Activated CD8-positive, alpha-beta T cell treated with anti-CD3 and anti-CD28 coated beads, Interleukin-2, amount 10 ng/mL, durations not matched to agents 7 days and 5 days (primary cell): ENCODE measurements at regions of chr1 and their contacts with region 1.

Region 1: GRCh38 chr1:45011837-45012638 is at the start of gene UROD:
- DNase-seq: peak; percentile 96
- ATAC-seq: peak; percentile 80
- H3K4me3 Mint-ChIP-seq: peak within 1 kb of the TSS; percentile 75
- H3K27ac Mint-ChIP-seq: peak within 1 kb of the TSS; percentile 81
- H3K4me1 Mint-ChIP-seq: peaks cover 42% of the 10 kb centered on the region
- H3K27me3 Mint-ChIP-seq: no peaks in the 10 kb centered on the region
- total RNA-seq, gene UROD: 74.7 to 76.4 TPM

Region 2: DNA sequence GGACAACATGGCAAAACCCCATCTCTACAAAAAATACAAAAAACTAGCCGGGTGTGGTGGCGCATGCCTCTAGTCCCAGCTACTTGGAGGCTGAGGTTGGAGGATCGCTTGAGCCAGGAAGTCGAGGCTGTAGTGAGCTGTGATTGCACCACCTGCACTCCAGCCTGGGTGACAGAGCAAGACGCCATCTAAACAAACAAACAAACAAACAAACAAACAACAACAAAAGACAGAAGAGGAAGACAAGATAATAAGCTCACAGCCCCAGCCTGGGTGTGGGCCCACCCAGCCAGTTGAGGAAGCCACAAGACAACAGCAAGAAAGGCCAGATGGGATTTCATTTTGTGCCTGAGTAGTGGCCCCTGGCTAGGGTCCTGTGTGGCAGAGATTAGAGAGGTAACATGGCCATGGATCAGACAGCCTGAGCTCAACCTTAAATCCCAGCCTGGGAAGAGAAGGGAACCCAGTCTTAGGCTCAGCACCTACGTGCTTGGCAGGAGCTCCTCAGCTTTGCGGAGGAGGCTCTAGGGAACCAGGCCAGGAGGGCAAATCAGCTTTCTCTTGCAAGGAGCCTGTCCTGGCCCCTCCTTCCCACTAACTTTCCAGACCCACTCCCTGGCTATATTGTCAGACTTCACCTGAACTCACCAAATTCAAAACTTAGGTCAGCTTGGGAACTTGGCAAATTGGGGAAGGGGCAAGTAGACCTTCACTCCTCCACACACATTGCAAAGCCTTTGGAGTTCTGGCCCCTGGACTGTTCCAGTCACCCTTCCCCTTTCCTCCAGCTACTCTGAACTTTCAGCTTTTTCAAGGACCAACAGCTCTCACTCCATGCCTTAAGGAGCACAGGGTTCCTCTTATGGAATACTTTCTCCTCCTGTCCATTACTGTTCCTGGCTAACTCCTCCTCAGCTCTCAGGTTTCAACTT is 219.0 kb before region 1 on chr1:
- CTCF ChIA-PET with region 1: interaction called, 23 read pairs
- POLR2A ChIA-PET with region 1: interaction called, 3 read pairs
- DNase-seq: no peak
- ATAC-seq: no peak
- H3K4me3 Mint-ChIP-seq: no peak overlapping the region
- H3K27ac Mint-ChIP-seq: no peak overlapping the region
- H3K4me1 Mint-ChIP-seq: peaks cover 3% of the 10 kb centered on the region
- H3K27me3 Mint-ChIP-seq: no peaks in the 10 kb centered on the region

Region 3: DNA sequence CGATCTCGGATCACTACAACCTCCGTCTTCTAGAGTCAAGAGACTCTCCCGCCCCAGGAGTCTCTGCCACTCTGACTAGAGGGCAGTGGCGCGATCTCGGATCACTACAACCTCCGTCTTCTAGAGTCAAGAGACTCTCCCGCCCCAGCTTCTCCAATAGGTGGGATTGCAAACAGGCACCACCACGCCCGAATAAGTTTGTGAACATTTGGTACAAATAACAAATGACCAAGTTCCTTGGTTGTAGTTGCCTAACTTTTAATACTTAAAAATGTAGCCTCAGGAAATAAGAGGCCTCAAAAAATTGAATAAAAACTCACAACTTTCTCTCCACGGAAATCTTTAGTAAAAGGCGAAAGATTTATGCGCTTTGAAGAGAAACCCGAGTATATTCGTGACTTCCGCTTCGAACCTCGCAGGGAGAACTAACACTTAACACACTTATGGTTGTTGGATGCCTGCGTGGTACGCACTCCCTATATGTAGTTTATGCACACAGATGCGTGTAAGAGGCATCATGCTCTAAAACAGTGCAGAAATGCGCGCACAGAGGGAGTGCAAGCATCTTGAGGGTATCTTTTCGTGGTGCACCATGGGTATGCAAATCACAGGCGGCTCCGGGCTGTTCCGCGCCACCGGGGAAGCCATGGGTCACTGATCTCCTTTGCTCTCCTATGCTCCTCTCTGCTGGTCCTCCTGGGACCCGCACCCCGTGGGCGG is 192.3 kb before region 1 on chr1:
- CTCF ChIA-PET with region 1: interaction called, 8 read pairs
- POLR2A ChIA-PET with region 1: interaction called, 40 read pairs
- DNase-seq: peak; percentile 92
- ATAC-seq: peak; percentile 92
- H3K4me3 Mint-ChIP-seq: peak overlapping the region; percentile 92
- H3K27ac Mint-ChIP-seq: peak overlapping the region; percentile 100
- H3K4me1 Mint-ChIP-seq: peaks cover 51% of the 10 kb centered on the region
- H3K27me3 Mint-ChIP-seq: no peaks in the 10 kb centered on the region

Region 4: DNA sequence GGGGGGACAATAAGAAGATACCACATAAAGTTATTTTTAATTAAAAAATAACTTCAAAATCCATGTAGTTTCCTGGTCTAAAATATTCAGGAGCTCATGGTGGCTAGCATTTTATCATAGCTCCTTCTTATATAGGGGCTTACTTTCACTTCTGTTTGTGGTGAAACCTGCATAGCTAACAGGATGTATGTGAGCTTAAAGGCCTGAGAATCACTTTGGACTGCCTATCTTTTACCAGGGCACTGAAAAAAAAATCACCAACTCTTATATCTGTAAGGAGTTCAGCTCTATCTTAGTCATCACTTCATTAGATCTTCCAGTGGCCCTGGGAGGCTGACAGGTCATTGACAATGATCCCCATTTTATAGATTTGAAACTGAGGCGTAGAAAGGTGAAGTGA is 21.3 kb after region 1 on chr1:
- CTCF ChIA-PET with region 1: interaction called, 19 read pairs
- POLR2A ChIA-PET with region 1: no interaction called
- DNase-seq: no peak
- ATAC-seq: peak; percentile 91
- H3K4me3 Mint-ChIP-seq: no peak overlapping the region
- H3K27ac Mint-ChIP-seq: peak overlapping the region; percentile 83
- H3K4me1 Mint-ChIP-seq: peaks cover 13% of the 10 kb centered on the region
- H3K27me3 Mint-ChIP-seq: no peaks in the 10 kb centered on the region

Region 5: DNA sequence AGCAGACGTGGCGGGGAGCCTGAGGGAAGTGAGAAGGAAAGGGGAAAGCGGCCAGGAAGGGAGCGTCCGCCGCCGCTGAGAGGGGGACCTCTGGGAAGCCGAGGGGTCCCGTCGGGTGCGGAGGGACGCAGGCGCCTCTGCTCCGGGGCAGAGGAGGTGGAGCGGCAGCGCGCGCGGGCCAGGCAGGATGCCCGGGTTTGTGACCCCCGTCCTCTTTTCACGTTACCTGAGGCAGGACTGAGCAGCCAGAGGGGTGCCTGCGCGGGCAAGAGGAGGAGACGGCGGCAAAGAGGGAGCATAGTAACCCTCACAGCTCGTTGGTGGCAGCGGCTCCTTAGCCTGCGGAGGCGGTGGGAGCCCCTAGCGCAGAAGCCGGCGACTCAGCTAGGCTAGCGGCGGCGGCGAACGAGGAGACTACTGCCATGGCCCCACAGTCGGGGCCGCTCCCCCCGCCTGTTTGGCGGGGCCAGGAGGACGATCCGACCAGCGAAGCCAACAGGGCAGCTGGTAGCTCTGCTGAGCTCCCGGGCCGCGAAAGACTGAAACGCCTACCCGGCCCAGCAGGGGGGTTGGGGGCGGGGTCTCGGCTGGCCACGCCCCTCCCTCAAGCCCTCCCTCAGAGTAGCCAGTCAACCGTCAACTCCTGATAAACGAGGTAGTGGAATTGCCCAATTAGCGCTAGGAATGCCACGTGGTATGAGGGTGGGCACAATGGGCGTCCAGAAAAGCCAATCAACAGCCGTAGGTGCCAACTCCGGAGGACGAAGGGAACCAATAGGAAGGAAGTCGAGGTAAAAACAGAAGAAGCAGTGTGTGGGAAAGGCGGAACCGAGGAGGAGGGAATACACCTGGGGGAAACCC is 478.8 kb after region 1 on chr1 and contains the start of gene TESK2:
- CTCF ChIA-PET with region 1: interaction called, 119 read pairs
- POLR2A ChIA-PET with region 1: interaction called, 9 read pairs
- DNase-seq: peak; percentile 98
- ATAC-seq: peak; percentile 99
- H3K4me3 Mint-ChIP-seq: no peak within 1 kb of the TSS
- H3K27ac Mint-ChIP-seq: no peak within 1 kb of the TSS
- H3K4me1 Mint-ChIP-seq: peaks cover 12% of the 10 kb centered on the region
- H3K27me3 Mint-ChIP-seq: peaks cover 5% of the 10 kb centered on the region
- total RNA-seq, gene TESK2: 3.3 to 3.5 TPM